Activated T-helper 2 cell treated with anti-CD3 and anti-CD28 coated beads, Interferon-gamma antibody, Interleukin-2, Interleukin-4, amounts not matched to agents 10 μg/mL and 5 μg/mL and 100 μg/mL, durations not matched to agents 14 hours and 24 hours and 36 hours (primary cell): ENCODE measurements at regions of chr7 and their contacts with region 1.

Region 1: DNA sequence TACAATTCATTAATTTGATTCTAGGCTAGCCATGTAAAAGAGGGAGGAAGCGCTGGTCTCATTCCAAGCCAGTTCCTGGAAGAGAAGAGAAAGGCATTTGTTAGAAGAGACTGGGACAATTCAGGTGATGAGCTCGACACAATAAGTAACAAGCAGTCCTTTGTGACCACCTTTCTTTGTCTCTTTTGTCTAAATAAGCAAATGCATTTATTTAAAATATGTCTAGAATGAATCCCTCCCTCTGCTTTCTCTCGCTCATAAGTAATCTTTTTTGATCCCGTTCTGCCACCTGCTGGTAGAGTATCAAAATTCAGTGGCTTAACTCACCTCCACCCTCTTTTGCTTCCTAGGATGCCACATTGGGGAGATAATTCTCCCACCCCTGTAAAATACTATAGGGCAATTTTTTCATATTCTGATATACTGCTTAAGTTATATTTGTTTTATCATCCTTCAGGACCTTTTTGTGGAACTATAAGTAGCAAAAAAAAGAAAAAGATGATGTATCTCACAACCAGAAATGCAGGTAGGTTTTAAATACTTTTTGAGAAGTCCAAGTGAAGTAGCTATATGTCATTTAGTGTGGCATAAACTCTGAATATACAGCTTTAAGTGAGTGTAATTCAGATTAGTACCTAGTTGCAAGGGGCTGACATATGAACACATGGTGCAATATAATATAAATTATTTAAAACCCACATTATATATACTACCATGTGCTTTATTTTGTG is 91.5 kb downstream of the GSDME start:
- DNase-seq: peak; percentile 12
- H3K4me3 Mint-ChIP-seq: no peak overlapping the region
- H3K27ac Mint-ChIP-seq: no peak overlapping the region
- H3K4me1 Mint-ChIP-seq: peaks cover 9% of the 10 kb centered on the region
- H3K27me3 Mint-ChIP-seq: no peaks in the 10 kb centered on the region

Region 2: GRCh38 chr7:24290004-24290641 is 375.6 kb before region 1 on chr7:
- intact Hi-C with region 1: loop called (anchors 1 kb)
- DNase-seq: peak; percentile 32
- H3K4me3 Mint-ChIP-seq: no peak overlapping the region
- H3K27ac Mint-ChIP-seq: no peak overlapping the region
- H3K4me1 Mint-ChIP-seq: peaks cover 8% of the 10 kb centered on the region
- H3K27me3 Mint-ChIP-seq: peaks cover 57% of the 10 kb centered on the region